Activated CD4-positive, alpha-beta memory T cell treated with anti-CD3 and anti-CD28 coated beads for 36 hours (primary cell): ENCODE measurements at regions of chr9 and their contacts with region 1.

Region 1: DNA sequence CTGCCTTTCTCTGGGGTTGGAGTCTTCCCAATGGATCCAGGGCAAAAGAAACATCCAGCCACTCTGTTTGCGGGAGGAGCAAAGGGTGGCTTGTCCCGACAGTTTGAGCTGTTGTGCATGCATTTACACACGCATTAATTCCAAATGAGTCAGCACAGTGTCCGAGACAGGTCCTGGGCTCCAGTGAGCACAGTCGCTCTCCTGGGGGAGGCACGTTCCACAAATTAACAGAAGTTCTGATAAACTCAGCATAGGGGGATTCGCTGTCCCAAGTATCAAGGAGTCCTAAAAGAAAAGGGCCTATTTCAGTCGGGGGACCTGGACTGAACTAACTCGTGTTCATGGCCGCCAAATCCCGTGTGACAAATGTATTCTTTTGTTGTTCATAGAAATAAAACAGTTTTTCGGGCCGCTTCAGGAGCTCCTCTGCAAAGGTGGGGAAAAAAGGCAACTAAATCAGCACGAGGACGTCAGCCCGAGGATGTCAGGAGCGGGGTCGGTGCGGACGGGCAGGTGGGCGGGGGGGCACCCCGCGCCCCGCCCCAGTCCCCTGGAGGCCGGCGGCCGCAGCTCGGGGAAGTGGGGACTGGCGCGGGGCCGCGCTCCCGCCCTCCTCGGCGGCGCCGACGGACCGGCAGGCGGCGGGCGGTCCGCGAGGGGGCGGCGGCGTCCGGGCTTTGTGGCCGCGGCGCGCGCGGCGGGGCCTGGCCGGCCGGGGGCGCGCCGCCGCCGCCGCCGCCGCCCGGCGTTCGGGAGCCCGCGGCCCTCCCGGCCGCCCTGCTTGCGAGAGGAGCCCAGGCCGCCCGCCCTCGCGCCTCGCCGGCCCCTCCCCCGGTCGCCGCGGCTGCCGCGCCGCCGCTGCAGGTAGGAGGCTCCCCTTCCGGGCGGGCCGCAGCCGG is at the start of gene MSANTD3:
- DNase-seq: peak; percentile 67
- H3K4me3 Mint-ChIP-seq: peak within 1 kb of the TSS; percentile 79
- H3K27ac Mint-ChIP-seq: peak within 1 kb of the TSS; percentile 82
- H3K4me1 Mint-ChIP-seq: peaks cover 40% of the 10 kb centered on the region
- H3K27me3 Mint-ChIP-seq: peaks cover 1% of the 10 kb centered on the region
- total RNA-seq, gene MSANTD3: 16.3 to 18.3 TPM

Region 2: DNA sequence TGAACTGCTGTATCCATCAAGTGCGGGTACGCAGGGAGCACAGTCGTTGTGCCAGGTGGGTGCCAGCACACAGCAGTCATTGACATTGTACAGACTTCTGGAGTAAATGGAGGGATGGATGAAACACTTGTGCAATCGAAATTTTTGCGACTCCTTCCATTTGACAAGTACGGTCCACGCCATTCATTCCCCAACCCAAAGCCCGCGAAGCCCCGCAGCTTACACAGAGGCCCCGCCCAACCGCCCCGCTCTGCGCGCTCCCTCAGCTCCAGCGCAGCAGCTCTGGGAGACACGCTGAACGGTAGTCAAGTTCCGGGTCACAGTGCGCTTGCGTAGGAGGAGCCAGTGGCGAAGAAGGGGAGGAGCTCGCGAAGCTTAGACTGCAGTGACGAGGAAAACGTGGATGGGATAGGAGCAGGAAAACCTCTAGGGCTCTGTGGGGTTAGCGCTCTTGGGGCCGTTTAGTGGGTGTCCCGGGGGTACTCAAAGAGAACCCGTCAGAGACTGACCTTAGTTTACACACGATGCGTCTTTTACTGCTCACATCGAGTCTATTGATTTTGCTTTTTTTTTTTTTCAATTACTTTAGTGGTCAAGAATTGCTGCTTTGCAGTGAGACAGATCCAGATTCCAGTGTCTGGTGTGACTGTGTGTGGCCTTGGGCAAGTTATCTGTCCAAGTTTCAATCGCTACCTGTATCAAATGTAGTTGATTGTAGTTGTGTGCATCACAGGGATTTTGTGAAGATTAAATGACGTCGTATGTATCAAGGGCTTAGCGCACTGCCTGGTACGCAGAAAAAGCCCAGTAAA is 15.1 kb before region 1 on chr9:
- CTCF ChIA-PET with region 1: no interaction called
- POLR2A ChIA-PET with region 1: interaction called, 4 read pairs
- intact Hi-C with region 1: loop called (anchors 1 kb)
- DNase-seq: peak; percentile 93
- H3K4me3 Mint-ChIP-seq: peak overlapping the region; percentile 79
- H3K27ac Mint-ChIP-seq: peak overlapping the region; percentile 66
- H3K4me1 Mint-ChIP-seq: peaks cover 11% of the 10 kb centered on the region
- H3K27me3 Mint-ChIP-seq: peaks cover 13% of the 10 kb centered on the region

Region 3: DNA sequence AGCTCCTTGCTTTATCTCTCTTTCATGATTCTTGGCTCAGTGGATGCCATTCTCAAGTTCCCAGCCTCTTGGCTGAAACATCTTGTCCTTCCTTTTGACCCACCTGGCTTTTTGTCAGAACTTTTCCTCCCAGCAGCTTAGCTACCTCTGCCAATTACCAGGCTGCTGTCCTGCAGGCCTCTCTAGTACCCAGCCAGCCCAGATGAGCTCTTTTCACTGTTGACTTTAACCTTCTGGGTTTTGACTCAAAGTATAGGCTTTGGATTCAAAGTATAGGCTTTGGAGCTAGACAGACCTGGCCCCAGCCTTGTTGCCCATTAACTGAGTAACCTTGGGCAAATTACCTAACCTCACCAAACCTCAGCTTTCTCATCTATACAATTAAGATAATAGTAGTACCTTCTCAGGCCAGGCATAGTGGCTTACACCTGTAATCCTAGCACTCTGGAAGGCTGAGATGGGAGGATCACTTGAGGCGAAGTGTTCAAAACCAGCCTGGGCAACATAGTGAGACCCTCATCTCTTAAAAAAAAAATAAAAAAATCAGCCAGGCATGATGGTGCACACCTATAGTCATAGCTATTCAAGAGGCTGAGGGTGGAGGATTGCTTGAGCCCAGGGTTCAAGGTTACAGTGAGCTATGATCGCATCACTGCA is 39.5 kb after region 1 on chr9:
- CTCF ChIA-PET with region 1: no interaction called
- POLR2A ChIA-PET with region 1: no interaction called
- intact Hi-C with region 1: no loop called
- DNase-seq: no peak
- H3K4me3 Mint-ChIP-seq: no peak overlapping the region
- H3K27ac Mint-ChIP-seq: no peak overlapping the region
- H3K4me1 Mint-ChIP-seq: no peaks in the 10 kb centered on the region
- H3K27me3 Mint-ChIP-seq: peaks cover 2% of the 10 kb centered on the region